Activated T-helper 2 cell treated with anti-CD3 and anti-CD28 coated beads, Interferon-gamma antibody, Interleukin-2, Interleukin-4, amounts not matched to agents 10 μg/mL and 5 μg/mL and 100 μg/mL, durations not matched to agents 14 hours and 24 hours and 36 hours (primary cell): ENCODE measurements at regions of chr7 and their contacts with region 1.

Region 1: DNA sequence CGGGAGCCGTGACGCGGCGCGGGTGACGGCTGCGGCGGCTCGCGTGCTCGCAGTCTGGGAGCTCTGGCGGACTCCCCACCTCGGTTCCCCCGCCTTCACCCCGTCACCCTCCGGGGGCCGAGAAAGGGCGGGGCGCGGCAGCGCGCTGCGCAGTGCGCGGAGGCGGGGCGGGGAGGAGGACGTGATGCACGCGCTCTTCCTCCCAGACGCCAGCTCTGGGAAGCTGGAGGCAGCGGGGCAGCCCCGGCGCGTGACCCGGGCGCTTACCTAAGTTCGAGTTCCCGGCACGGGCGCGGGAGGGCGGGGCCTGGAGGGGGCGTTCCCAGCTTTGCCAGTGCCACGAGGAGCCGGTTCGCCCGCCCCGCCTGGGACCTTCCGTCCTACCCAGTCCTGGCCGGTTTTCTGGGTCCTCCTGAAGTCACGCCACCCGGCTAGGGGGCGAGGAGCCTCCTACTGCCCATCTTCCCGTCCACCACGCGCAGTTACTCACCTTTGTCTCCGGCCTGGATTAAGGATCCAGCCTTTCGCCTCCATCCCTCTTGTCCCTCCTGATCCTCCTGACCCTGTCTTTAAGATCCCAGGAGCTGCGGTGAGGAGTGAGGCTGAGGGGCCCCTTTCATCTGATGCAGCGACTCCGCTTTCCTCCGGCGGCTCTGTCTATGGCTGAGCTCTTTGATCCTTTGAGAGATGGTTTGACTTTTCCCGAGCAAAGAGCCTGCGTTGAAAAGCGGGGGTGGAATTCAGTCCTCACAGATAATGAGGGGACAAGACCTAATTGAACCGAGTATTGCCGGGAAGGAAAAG is 470 bp upstream of the NAMPT start:
- DNase-seq: peak; percentile 95
- H3K4me3 Mint-ChIP-seq: peak overlapping the region; percentile 95
- H3K27ac Mint-ChIP-seq: peak overlapping the region; percentile 99
- H3K4me1 Mint-ChIP-seq: peaks cover 40% of the 10 kb centered on the region
- H3K27me3 Mint-ChIP-seq: no peaks in the 10 kb centered on the region

Region 2: GRCh38 chr7:105173586-105173985 is 1111.7 kb before region 1 on chr7:
- intact Hi-C with region 1: no loop called
- DNase-seq: no peak
- H3K4me3 Mint-ChIP-seq: no peak overlapping the region
- H3K27ac Mint-ChIP-seq: no peak overlapping the region
- H3K4me1 Mint-ChIP-seq: no peaks in the 10 kb centered on the region
- H3K27me3 Mint-ChIP-seq: no peaks in the 10 kb centered on the region

Region 3: GRCh38 chr7:106071356-106071998 is 213.8 kb before region 1 on chr7:
- intact Hi-C with region 1: loop called (anchors 10 kb)
- DNase-seq: peak; percentile 41
- H3K4me3 Mint-ChIP-seq: peak overlapping the region; percentile 75
- H3K27ac Mint-ChIP-seq: peak overlapping the region; percentile 98
- H3K4me1 Mint-ChIP-seq: peaks cover 62% of the 10 kb centered on the region
- H3K27me3 Mint-ChIP-seq: no peaks in the 10 kb centered on the region

Region 4: DNA sequence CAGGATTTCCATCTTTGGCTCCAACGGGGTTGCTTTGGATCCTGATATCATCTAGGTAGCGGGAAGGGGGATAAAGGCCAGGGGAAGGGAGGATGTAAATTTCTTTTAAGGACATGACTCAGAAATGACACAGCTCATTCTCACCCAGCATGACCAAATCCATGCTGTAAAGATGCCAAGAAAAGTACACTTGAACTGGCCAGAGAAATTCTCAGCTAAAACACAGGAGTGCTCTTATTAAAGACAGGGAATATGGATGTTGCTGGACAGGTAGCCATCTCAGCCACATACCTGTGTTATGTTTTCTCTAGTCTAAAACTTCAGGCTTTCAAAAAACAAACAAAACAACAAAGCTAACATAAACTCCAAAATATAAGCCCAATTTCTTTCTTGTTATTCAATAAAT is 68.7 kb before region 1 on chr7:
- intact Hi-C with region 1: no loop called
- DNase-seq: no peak
- H3K4me3 Mint-ChIP-seq: no peak overlapping the region
- H3K27ac Mint-ChIP-seq: no peak overlapping the region
- H3K4me1 Mint-ChIP-seq: no peaks in the 10 kb centered on the region
- H3K27me3 Mint-ChIP-seq: peaks cover 34% of the 10 kb centered on the region

Region 5: DNA sequence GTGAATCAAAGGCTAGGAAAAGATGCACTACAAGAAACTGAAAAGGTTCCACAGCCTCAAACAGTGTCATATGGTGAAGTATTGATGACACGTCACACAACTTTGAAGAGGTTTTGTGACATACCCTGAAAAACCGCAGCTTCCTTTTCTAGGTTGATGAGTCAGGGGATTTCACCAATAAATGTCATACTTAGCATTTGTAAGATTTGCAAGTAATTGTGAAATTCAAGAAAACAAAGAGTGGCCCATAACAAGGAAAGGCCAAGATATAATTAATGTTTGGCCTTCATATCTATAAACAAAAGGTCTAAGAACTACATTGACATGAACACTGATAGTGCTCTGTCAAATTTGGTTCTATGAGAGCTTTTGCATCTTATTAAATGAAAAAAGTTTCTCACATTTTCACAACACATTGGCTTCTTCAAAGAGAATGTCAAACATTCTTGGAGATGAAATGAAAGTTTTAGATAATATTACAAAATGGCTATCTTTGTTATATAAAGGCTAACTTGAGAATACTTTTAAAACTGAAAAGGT is 61.5 kb after region 1 on chr7:
- intact Hi-C with region 1: loop called (anchors 1 kb)
- DNase-seq: peak; percentile 62
- H3K4me3 Mint-ChIP-seq: no peak overlapping the region
- H3K27ac Mint-ChIP-seq: peak overlapping the region; percentile 100
- H3K4me1 Mint-ChIP-seq: peaks cover 51% of the 10 kb centered on the region
- H3K27me3 Mint-ChIP-seq: no peaks in the 10 kb centered on the region

Region 6: GRCh38 chr7:106425017-106425719 is 139.9 kb after region 1 on chr7:
- intact Hi-C with region 1: loop called (anchors 1 kb)
- DNase-seq: peak; percentile 44
- H3K4me3 Mint-ChIP-seq: peak overlapping the region; percentile 65
- H3K27ac Mint-ChIP-seq: peak overlapping the region; percentile 98
- H3K4me1 Mint-ChIP-seq: peaks cover 75% of the 10 kb centered on the region
- H3K27me3 Mint-ChIP-seq: no peaks in the 10 kb centered on the region

Region 7: DNA sequence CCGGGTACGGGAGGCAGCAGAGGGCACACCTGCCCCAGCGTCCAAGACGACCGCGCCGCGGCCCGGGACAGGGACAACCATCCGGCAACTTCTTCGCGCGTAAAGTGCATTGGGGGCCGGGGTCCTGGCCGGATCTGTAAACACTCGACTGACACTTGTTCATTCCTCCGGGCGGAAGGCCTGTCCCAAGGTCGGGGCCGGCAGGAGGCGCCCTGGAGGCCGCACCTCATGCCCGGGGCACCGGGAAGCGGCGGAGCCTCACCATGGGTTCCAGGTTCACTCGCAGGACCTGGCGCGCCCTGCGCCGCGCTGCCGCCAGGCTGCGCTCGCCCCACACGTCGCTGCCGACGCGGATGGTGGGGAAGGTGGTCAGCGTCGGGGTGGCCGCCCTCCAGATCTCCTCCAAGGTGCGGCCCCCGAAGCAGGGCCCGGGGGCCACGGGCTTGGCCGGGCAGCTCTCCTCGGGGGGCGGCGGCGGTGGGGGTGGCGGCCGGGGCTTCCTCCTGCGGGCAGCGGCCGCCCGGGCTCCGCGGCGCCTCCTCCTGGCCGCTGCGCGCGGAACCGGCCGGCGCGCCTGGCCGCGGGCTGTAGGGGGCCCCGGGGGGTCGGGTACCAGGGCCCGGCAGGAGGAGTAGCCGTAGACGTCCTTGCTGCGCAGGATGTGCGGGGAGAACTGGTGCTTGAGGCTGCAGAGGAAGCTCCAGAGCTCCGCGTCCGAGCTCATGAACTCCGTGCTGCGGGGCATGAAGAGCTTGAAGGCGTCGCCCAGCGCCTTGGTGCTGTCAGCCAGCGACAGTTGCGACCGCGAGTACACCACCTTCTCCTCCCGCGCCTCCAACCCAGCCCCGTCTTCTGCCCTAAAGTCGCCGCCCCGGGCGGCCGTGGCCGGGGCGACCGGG is 375.0 kb after region 1 on chr7:
- intact Hi-C with region 1: loop called (anchors 5 kb)
- DNase-seq: peak; percentile 82
- H3K4me3 Mint-ChIP-seq: peak overlapping the region; percentile 96
- H3K27ac Mint-ChIP-seq: peak overlapping the region; percentile 93
- H3K4me1 Mint-ChIP-seq: peaks cover 33% of the 10 kb centered on the region
- H3K27me3 Mint-ChIP-seq: no peaks in the 10 kb centered on the region

Region 8: DNA sequence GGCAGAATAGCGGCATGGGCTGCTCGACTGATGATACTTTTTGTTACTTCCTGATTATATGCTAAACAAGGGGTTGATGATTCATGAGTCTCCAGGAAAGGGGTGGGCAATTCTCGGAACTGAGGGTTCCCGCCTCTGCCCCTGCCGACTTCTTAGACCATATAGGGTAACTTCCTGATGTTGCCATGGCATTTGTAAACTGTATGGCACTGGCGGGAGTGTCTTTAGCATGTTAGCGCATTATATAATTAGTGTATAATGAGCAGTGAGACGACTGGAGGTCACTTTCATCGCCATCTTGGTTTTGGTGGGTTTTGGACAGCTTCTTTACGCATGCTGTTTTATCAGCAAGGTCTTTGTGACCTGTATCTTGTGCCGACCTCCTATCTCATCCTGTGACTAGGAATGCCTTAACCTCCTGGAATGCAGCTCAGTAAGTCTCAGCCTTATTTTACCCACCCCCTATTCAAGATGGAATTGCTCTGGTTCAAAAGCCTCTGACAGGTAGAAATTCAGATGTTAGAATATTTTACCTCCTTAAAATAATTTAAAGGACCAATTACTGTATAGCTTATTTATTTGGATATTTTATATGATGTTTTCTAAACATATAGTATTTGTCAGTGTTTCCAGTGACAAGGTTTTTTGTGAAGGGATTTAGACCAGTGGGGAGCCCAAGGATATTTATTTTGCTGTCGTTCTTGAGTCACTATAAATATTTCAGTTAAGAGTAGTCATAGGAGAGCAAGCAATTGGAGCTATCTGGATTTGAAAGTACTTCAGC is 489.7 kb after region 1 on chr7:
- intact Hi-C with region 1: loop called (anchors 5 kb)
- DNase-seq: no peak
- H3K4me3 Mint-ChIP-seq: no peak overlapping the region
- H3K27ac Mint-ChIP-seq: peak overlapping the region; percentile 14
- H3K4me1 Mint-ChIP-seq: peaks cover 36% of the 10 kb centered on the region
- H3K27me3 Mint-ChIP-seq: no peaks in the 10 kb centered on the region